Naive thymus-derived CD4-positive, alpha-beta T cell (primary cell): ENCODE measurements at regions of chr3 and their contacts with region 1.

Region 1: DNA sequence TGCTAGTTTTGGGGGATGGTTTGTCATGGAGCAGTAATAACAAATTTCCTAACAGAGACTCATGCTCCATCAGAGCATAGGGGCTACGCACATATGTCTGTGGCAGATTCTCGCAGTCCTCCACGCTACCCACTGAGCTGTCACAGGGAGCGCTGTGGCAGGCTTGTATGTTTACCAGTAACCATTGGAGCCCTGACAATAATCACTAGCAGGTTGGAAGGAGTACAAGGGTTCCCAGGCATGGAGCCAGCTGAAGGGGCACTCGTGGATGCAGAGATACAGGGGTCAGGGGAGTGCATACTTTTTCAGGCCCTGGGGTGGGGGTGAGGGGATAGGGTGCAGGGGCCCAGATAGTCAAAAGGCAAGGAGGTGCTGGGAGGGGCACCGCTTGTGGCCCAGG is 7.9 kb upstream of the GP9 start:
- DNase-seq: no peak
- ATAC-seq: no peak
- H3K4me3 ChIP-seq: no peak overlapping the region
- H3K4me3 Mint-ChIP-seq: no peak overlapping the region
- H3K27ac ChIP-seq: no peak overlapping the region
- H3K27ac Mint-ChIP-seq: peak overlapping the region in 3 of 9 donors; percentile 38 to 69 (median 38)
- H3K4me1 ChIP-seq: no peaks in the 10 kb centered on the region
- H3K4me1 Mint-ChIP-seq: peaks cover 3 to 20% (median 9%) of the 10 kb centered on the region in 7 donors
- H3K27me3 ChIP-seq: no peaks in the 10 kb centered on the region
- H3K27me3 Mint-ChIP-seq: peaks cover 0 to 14% (median 0%) of the 10 kb centered on the region in 5 donors

Region 2: GRCh38 chr3:129003578-129004160 is 49.0 kb before region 1 on chr3:
- CTCF ChIA-PET with region 1: interaction called, 6 read pairs
- POLR2A ChIA-PET with region 1: interaction called, 3 read pairs
- intact Hi-C with region 1: loop called in 1 of 2 experiments (anchors 2 kb)
- DNase-seq: peak; percentile 46 to 70 (median 62)
- ATAC-seq: peak; percentile 94
- H3K4me3 ChIP-seq: no peak overlapping the region
- H3K4me3 Mint-ChIP-seq: peak overlapping the region; percentile 55 to 84 (median 72)
- H3K27ac ChIP-seq: no peak overlapping the region
- H3K27ac Mint-ChIP-seq: peak overlapping the region in 3 of 9 donors; percentile 19 to 72 (median 68)
- H3K4me1 ChIP-seq: peaks cover 5 to 33% of the 10 kb centered on the region in 2 donors
- H3K4me1 Mint-ChIP-seq: peaks cover 29 to 62% (median 52%) of the 10 kb centered on the region in 7 donors
- H3K27me3 ChIP-seq: peaks cover 5 to 8% of the 10 kb centered on the region in 2 donors
- H3K27me3 Mint-ChIP-seq: peaks cover 13 to 61% (median 24%) of the 10 kb centered on the region in 5 donors

Region 3: GRCh38 chr3:129016356-129016719 is 36.3 kb before region 1 on chr3:
- CTCF ChIA-PET with region 1: interaction called, 37 read pairs
- POLR2A ChIA-PET with region 1: interaction called, 10 read pairs
- intact Hi-C with region 1: loop called in 1 of 2 experiments (anchors 1 kb)
- DNase-seq: peak in 7 of 9 donors; percentile 54 to 71 (median 65)
- ATAC-seq: peak; percentile 85
- H3K4me3 ChIP-seq: peak overlapping the region; percentile 41
- H3K4me3 Mint-ChIP-seq: peak overlapping the region; percentile 68 to 87 (median 84)
- H3K27ac ChIP-seq: peak overlapping the region; percentile 75
- H3K27ac Mint-ChIP-seq: peak overlapping the region; percentile 90 to 100 (median 97)
- H3K4me1 ChIP-seq: peaks cover 26 to 33% of the 10 kb centered on the region in 2 donors
- H3K4me1 Mint-ChIP-seq: peaks cover 31 to 66% (median 48%) of the 10 kb centered on the region in 7 donors
- H3K27me3 ChIP-seq: no peaks in the 10 kb centered on the region
- H3K27me3 Mint-ChIP-seq: no peaks in the 10 kb centered on the region

Region 4: GRCh38 chr3:129026728-129027543 is 25.7 kb before region 1 on chr3:
- CTCF ChIA-PET with region 1: interaction called, 14 read pairs
- POLR2A ChIA-PET with region 1: interaction called, 13 read pairs
- intact Hi-C with region 1: loop called (anchors 1 to 2 kb)
- DNase-seq: peak; percentile 84 to 94 (median 93)
- ATAC-seq: peak; percentile 99
- H3K4me3 ChIP-seq: peak overlapping the region; percentile 67
- H3K4me3 Mint-ChIP-seq: peak overlapping the region; percentile 69 to 88 (median 86)
- H3K27ac ChIP-seq: peak overlapping the region; percentile 74
- H3K27ac Mint-ChIP-seq: peak overlapping the region; percentile 82 to 97 (median 93)
- H3K4me1 ChIP-seq: peaks cover 8 to 11% of the 10 kb centered on the region in 2 donors
- H3K4me1 Mint-ChIP-seq: peaks cover 13 to 31% (median 25%) of the 10 kb centered on the region in 7 donors
- H3K27me3 ChIP-seq: no peaks in the 10 kb centered on the region
- H3K27me3 Mint-ChIP-seq: peaks cover 0 to 3% (median 0%) of the 10 kb centered on the region in 5 donors

Region 5: GRCh38 chr3:129040579-129041300 is 11.9 kb before region 1 on chr3:
- CTCF ChIA-PET with region 1: interaction called, 22 read pairs
- POLR2A ChIA-PET with region 1: interaction called, 3 read pairs
- intact Hi-C with region 1: no loop called
- DNase-seq: no peak
- ATAC-seq: no peak
- H3K4me3 ChIP-seq: no peak overlapping the region
- H3K4me3 Mint-ChIP-seq: no peak overlapping the region
- H3K27ac ChIP-seq: no peak overlapping the region
- H3K27ac Mint-ChIP-seq: peak overlapping the region in 1 of 9 donors; percentile 36
- H3K4me1 ChIP-seq: peaks cover 0 to 8% of the 10 kb centered on the region in 2 donors
- H3K4me1 Mint-ChIP-seq: peaks cover 2 to 36% (median 11%) of the 10 kb centered on the region in 7 donors
- H3K27me3 ChIP-seq: no peaks in the 10 kb centered on the region
- H3K27me3 Mint-ChIP-seq: peaks cover 0 to 56% (median 9%) of the 10 kb centered on the region in 5 donors

Region 6: GRCh38 chr3:129087138-129087702 is 34.5 kb after region 1 on chr3:
- CTCF ChIA-PET with region 1: interaction called, 10 read pairs
- POLR2A ChIA-PET with region 1: no interaction called
- intact Hi-C with region 1: loop called in 1 of 2 experiments (anchors 2 kb)
- DNase-seq: no peak
- ATAC-seq: no peak
- H3K4me3 ChIP-seq: no peak overlapping the region
- H3K4me3 Mint-ChIP-seq: no peak overlapping the region
- H3K27ac ChIP-seq: peak overlapping the region; percentile 39
- H3K27ac Mint-ChIP-seq: peak overlapping the region in 4 of 9 donors; percentile 38 to 88 (median 62)
- H3K4me1 ChIP-seq: no peaks in the 10 kb centered on the region
- H3K4me1 Mint-ChIP-seq: peaks cover 0 to 21% (median 14%) of the 10 kb centered on the region in 7 donors
- H3K27me3 ChIP-seq: no peaks in the 10 kb centered on the region
- H3K27me3 Mint-ChIP-seq: no peaks in the 10 kb centered on the region

Region 7: GRCh38 chr3:129160891-129161859 is 108.5 kb after region 1 on chr3 and contains the start of gene ISY1:
- CTCF ChIA-PET with region 1: interaction called, 16 read pairs
- POLR2A ChIA-PET with region 1: interaction called, 4 read pairs
- intact Hi-C with region 1: loop called in 1 of 2 experiments (anchors 1 kb)
- DNase-seq: peak; percentile 68 to 92 (median 89)
- ATAC-seq: peak; percentile 90
- H3K4me3 ChIP-seq: peak within 1 kb of the TSS; percentile 94
- H3K4me3 Mint-ChIP-seq: peak within 1 kb of the TSS; percentile 84 to 100 (median 98)
- H3K27ac ChIP-seq: peak within 1 kb of the TSS; percentile 98
- H3K27ac Mint-ChIP-seq: peak within 1 kb of the TSS; percentile 97 to 100 (median 99)
- H3K4me1 ChIP-seq: peaks cover 22 to 24% of the 10 kb centered on the region in 2 donors
- H3K4me1 Mint-ChIP-seq: peaks cover 18 to 53% (median 40%) of the 10 kb centered on the region in 7 donors
- H3K27me3 ChIP-seq: no peaks in the 10 kb centered on the region
- H3K27me3 Mint-ChIP-seq: peaks cover 0 to 4% (median 0%) of the 10 kb centered on the region in 5 donors
- total RNA-seq, gene ISY1: 27.6 to 65.1 (median 37.4) TPM

Region 8: GRCh38 chr3:129688271-129688895 is 635.7 kb after region 1 on chr3:
- CTCF ChIA-PET with region 1: no interaction called
- POLR2A ChIA-PET with region 1: no interaction called
- intact Hi-C with region 1: no loop called
- DNase-seq: no peak
- ATAC-seq: no peak
- H3K4me3 ChIP-seq: no peak overlapping the region
- H3K4me3 Mint-ChIP-seq: no peak overlapping the region
- H3K27ac ChIP-seq: no peak overlapping the region
- H3K27ac Mint-ChIP-seq: no peak overlapping the region
- H3K4me1 ChIP-seq: peaks cover 0 to 6% of the 10 kb centered on the region in 2 donors
- H3K4me1 Mint-ChIP-seq: peaks cover 5 to 23% (median 13%) of the 10 kb centered on the region in 7 donors
- H3K27me3 ChIP-seq: no peaks in the 10 kb centered on the region
- H3K27me3 Mint-ChIP-seq: no peaks in the 10 kb centered on the region